ENCODE measurements at regions of chr19 and their contacts with region 1.

Region 1: DNA sequence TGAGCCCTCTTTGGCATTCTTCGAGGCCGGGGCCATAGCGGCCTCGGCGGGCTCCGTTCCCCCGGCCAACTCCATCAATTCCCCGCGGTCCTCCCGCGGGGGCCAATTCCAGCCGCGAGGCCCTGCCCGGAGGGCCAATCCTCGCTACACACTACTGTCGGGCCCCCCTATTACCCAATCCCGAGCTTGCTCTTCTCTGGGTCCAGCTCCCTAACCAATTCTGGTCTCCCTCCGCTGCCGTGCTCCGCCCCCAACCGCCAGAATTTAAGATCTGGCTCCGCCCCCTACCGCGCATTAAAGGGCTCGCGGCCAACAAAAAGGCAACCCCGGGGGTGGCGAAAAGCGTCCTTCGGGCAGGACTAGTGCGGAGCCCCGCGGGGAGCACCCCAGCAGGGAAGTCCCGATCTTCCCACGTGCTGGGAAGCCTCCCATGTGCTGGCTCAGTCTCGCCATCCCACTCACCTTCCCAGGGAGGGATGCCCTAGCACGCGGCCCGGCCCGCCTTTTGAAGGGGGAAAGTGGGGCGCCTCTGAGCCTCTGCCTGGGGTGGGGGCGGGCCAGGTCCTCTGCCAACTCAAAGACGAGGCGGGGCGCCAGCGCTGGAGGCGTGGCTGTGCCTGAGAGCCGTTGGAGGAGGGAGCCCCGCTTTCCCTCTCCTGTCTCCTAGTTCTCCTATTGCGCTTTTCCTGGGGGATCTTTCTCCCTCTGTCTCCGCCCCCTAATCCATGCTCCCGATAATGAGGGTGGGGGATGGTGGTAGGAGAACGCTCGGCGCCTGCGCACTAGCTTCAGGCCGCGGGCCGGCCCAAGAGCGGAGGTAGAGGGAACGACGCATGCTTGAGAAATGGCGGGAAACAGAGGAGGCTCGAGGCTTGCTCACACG is 3.5 kb downstream of the LIPE start:
- DNase-seq: peak; percentile 96
- H3K4me3 Mint-ChIP-seq: peak overlapping the region; percentile 93
- H3K27ac Mint-ChIP-seq: peak overlapping the region; percentile 86
- H3K4me1 Mint-ChIP-seq: peaks cover 33% of the 10 kb centered on the region
- H3K27me3 Mint-ChIP-seq: no peaks in the 10 kb centered on the region

Region 2: GRCh38 chr19:42075616-42076379 is 347.9 kb before region 1 on chr19 and contains the start of gene ZNF574:
- CTCF ChIA-PET with region 1: no interaction called
- intact Hi-C with region 1: loop called (anchors 1 kb)
- DNase-seq: peak; percentile 99
- H3K4me3 Mint-ChIP-seq: peak within 1 kb of the TSS; percentile 97
- H3K27ac Mint-ChIP-seq: peak within 1 kb of the TSS; percentile 96
- H3K4me1 Mint-ChIP-seq: peaks cover 22% of the 10 kb centered on the region
- H3K27me3 Mint-ChIP-seq: no peaks in the 10 kb centered on the region
- total RNA-seq, gene ZNF574: 8.4 to 8.8 TPM

Region 3: GRCh38 chr19:42098781-42099180 is 324.9 kb before region 1 on chr19:
- CTCF ChIA-PET with region 1: no interaction called
- intact Hi-C with region 1: no loop called
- DNase-seq: no peak
- H3K4me3 Mint-ChIP-seq: no peak overlapping the region
- H3K27ac Mint-ChIP-seq: no peak overlapping the region
- H3K4me1 Mint-ChIP-seq: no peaks in the 10 kb centered on the region
- H3K27me3 Mint-ChIP-seq: no peaks in the 10 kb centered on the region

Region 4: DNA sequence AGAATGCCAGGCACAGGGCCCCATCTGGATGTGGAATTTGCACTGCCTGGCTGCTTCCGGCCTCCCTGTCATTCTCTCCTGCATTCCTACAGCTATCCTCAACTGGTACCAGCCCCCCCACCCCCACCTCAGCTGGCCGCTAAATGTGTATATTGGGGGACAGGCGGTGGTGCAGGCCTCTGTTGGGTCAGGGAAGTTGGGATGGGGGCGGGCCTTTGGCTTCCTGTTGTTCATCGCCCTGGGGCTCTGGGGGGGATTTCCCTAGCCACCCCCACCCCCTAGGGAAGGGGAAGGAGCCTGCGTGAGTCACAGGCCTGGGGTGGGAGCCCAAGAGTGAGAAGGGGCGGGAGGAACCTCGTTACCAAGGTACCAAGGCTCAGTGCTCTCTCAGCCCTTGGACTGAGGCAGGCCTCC is 302.0 kb before region 1 on chr19:
- CTCF ChIA-PET with region 1: no interaction called
- intact Hi-C with region 1: loop called (anchors 2 kb)
- DNase-seq: peak; percentile 97
- H3K4me3 Mint-ChIP-seq: peak overlapping the region; percentile 76
- H3K27ac Mint-ChIP-seq: peak overlapping the region; percentile 98
- H3K4me1 Mint-ChIP-seq: peaks cover 54% of the 10 kb centered on the region
- H3K27me3 Mint-ChIP-seq: no peaks in the 10 kb centered on the region

Region 5: GRCh38 chr19:42166316-42166715 is 257.4 kb before region 1 on chr19:
- CTCF ChIA-PET with region 1: no interaction called
- intact Hi-C with region 1: no loop called
- DNase-seq: no peak
- H3K4me3 Mint-ChIP-seq: no peak overlapping the region
- H3K27ac Mint-ChIP-seq: no peak overlapping the region
- H3K4me1 Mint-ChIP-seq: no peaks in the 10 kb centered on the region
- H3K27me3 Mint-ChIP-seq: no peaks in the 10 kb centered on the region

Region 6: GRCh38 chr19:42301656-42302203 is 122.0 kb before region 1 on chr19 and contains the start of gene PRR19:
- CTCF ChIA-PET with region 1: interaction called, 4 read pairs
- intact Hi-C with region 1: loop called (anchors 1 kb)
- DNase-seq: no peak
- H3K4me3 Mint-ChIP-seq: peak within 1 kb of the TSS; percentile 85
- H3K27ac Mint-ChIP-seq: peak within 1 kb of the TSS; percentile 85
- H3K4me1 Mint-ChIP-seq: peaks cover 19% of the 10 kb centered on the region
- H3K27me3 Mint-ChIP-seq: no peaks in the 10 kb centered on the region
- total RNA-seq, gene PRR19: 0.27 to 0.43 TPM

Region 7: GRCh38 chr19:42440357-42441048 is 16.8 kb after region 1 on chr19:
- CTCF ChIA-PET with region 1: interaction called, 24 read pairs
- intact Hi-C with region 1: loop called (anchors 1 kb)
- DNase-seq: peak; percentile 88
- H3K4me3 Mint-ChIP-seq: peak overlapping the region; percentile 3
- H3K27ac Mint-ChIP-seq: no peak overlapping the region
- H3K4me1 Mint-ChIP-seq: peaks cover 14% of the 10 kb centered on the region
- H3K27me3 Mint-ChIP-seq: no peaks in the 10 kb centered on the region

Region 8: DNA sequence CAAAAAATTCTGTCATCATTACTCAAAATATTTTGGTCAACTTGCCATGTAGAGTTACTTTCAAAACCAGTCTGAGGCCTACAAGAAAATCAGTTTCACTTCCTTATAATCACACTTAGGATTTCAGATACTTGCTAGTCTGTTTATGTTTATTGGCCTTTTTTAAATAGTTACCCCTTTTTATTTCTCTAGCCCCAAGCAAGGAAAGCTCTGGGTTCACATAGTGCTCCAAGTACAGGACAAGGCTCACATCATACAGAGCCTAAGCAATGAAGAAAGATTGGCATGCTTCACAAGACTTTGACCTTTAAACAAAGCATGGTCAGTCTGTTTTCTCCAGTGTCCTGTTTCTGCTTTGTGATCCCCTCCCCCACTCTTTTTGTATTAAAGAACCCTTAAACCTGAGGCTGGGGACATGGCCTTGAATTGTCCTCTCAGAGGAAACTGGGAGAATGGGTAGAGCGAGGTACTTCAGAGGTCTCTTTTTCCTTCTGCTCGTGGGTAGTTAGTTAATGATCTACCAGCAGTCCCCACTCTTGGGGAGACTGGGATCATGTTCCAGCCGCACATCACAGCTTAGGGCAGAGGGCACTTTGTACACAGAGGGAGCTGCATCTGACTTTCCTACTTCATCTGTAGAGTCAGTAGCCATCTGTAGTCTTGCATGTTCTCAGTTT is 73.9 kb after region 1 on chr19:
- CTCF ChIA-PET with region 1: no interaction called
- intact Hi-C with region 1: no loop called
- DNase-seq: no peak
- H3K4me3 Mint-ChIP-seq: no peak overlapping the region
- H3K27ac Mint-ChIP-seq: no peak overlapping the region
- H3K4me1 Mint-ChIP-seq: no peaks in the 10 kb centered on the region
- H3K27me3 Mint-ChIP-seq: no peaks in the 10 kb centered on the region

Measured in activated naive CD4-positive, alpha-beta T cell treated with anti-CD3 and anti-CD28 coated beads for 36 hours (primary cell).